ENCODE measurements at regions of chr17 and their contacts with region 1.

Region 1: GRCh38 chr17:7614422-7615264 is at the start of gene FXR2:
- DNase-seq: peak; percentile 100
- ATAC-seq: peak; percentile 96
- H3K4me3 Mint-ChIP-seq: peak within 1 kb of the TSS; percentile 83
- H3K27ac Mint-ChIP-seq: peak within 1 kb of the TSS; percentile 99
- H3K4me1 Mint-ChIP-seq: peaks cover 22% of the 10 kb centered on the region
- H3K27me3 Mint-ChIP-seq: no peaks in the 10 kb centered on the region
- CTCF ChIP-seq: peak; percentile 36; the same call in 1 of the 2 replicates
- total RNA-seq, gene FXR2: 32.5 to 35.1 TPM (median 33.3 TPM) in 3 replicates

Region 2: GRCh38 chr17:7583253-7584109 is 31.2 kb before region 1 on chr17 and contains the start of gene MPDU1:
- CTCF ChIA-PET with region 1: interaction called, 30 read pairs
- POLR2A ChIA-PET with region 1: interaction called, 11 read pairs
- DNase-seq: peak; percentile 96
- ATAC-seq: peak; percentile 26
- H3K4me3 Mint-ChIP-seq: peak within 1 kb of the TSS; percentile 97
- H3K27ac Mint-ChIP-seq: peak within 1 kb of the TSS; percentile 100
- H3K4me1 Mint-ChIP-seq: peaks cover 48% of the 10 kb centered on the region
- H3K27me3 Mint-ChIP-seq: no peaks in the 10 kb centered on the region
- CTCF ChIP-seq: no peak
- total RNA-seq, gene MPDU1: 55.3 to 57.7 TPM (median 57.0 TPM) in 3 replicates

Region 3: DNA sequence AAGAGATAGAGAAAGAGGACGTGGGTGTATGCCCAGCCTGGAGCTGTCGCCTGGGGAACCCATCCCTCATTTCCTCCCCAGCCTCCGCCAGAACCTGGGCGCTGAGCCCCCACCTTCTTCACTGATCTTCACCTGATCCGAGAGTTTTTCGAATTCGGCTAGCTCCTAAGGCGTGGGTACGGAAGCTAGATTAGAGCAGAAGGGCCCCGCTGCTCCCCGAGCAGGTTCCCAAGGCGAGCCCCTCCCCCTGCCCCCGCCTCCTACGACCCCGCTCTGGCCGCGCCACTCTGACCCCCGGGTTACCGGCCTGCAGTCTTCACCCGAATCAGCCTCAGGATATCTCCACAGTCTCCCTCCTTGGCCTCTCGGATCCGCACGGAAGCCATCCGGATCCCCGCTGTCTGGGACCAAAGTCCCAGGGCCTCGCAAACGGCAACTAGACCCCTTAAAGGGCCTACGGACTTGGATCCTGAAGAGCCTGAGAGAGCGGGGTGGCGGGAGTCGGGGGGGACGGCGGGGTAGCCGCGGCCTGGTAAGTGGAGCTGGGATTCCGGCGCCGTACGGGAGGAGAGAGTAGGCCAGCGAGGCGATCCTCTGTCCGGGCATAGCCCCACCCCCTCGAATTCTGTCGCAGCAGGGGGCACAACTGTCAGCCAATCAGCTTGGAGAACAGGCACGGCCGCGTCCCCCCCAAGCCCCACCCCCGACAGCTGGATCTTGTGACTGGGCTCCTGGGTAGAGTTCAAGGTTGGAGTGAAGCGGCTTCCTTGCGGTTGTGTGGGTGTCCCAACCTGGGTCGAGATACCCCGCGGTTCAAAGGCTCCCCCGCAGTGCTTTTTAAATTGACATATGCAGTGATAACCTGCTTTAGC is 12.8 kb after region 1 on chr17 and contains the start of gene SAT2:
- CTCF ChIA-PET with region 1: interaction called, 39 read pairs
- POLR2A ChIA-PET with region 1: interaction called, 8 read pairs
- DNase-seq: peak; percentile 99
- ATAC-seq: peak; percentile 87
- H3K4me3 Mint-ChIP-seq: peak within 1 kb of the TSS; percentile 85
- H3K27ac Mint-ChIP-seq: peak within 1 kb of the TSS; percentile 85
- H3K4me1 Mint-ChIP-seq: peaks cover 9% of the 10 kb centered on the region
- H3K27me3 Mint-ChIP-seq: no peaks in the 10 kb centered on the region
- CTCF ChIP-seq: no peak
- total RNA-seq, gene SAT2: 68.3 to 75.8 TPM (median 73.1 TPM) in 3 replicates

Region 4: DNA sequence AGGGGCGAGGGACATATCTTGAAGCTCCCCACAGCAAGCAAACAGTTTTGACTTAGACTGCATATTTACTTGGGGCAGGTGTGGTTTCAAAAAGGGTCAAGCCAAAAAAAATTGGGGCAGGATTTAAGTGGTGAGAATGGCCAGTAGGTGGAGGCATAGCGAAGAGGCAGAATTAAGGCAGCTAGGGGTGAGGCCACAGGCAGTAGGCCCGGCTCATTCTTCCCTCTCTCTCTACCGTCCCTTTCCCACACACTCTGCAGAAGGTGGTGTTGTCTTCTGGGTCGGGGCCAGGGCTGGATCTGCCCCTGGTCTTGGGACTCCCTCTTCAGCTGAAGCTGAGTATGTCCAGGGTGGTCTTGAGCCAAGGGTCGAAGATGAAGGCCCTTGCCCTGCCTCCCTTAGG is 17.9 kb after region 1 on chr17:
- CTCF ChIA-PET with region 1: interaction called, 39 read pairs
- POLR2A ChIA-PET with region 1: interaction called, 8 read pairs
- DNase-seq: peak; percentile 56
- ATAC-seq: peak; percentile 55
- H3K4me3 Mint-ChIP-seq: no peak overlapping the region
- H3K27ac Mint-ChIP-seq: no peak overlapping the region
- H3K4me1 Mint-ChIP-seq: peaks cover 35% of the 10 kb centered on the region
- H3K27me3 Mint-ChIP-seq: no peaks in the 10 kb centered on the region
- CTCF ChIP-seq: peak; percentile 28; the same call in 1 of the 2 replicates

Region 5: GRCh38 chr17:7650509-7651096 is 36.0 kb after region 1 on chr17 and contains the start of gene ATP1B2:
- CTCF ChIA-PET with region 1: interaction called, 15 read pairs
- POLR2A ChIA-PET with region 1: interaction called, 5 read pairs
- DNase-seq: peak; percentile 96
- ATAC-seq: peak; percentile 97
- H3K4me3 Mint-ChIP-seq: peak within 1 kb of the TSS; percentile 83
- H3K27ac Mint-ChIP-seq: peak within 1 kb of the TSS; percentile 73
- H3K4me1 Mint-ChIP-seq: peaks cover 33% of the 10 kb centered on the region
- H3K27me3 Mint-ChIP-seq: peaks cover 53% of the 10 kb centered on the region
- CTCF ChIP-seq: no peak
- total RNA-seq, gene ATP1B2: 29.1 to 37.5 TPM (median 35.9 TPM) in 3 replicates

Region 6: GRCh38 chr17:7695586-7695985 is 80.9 kb after region 1 on chr17:
- CTCF ChIA-PET with region 1: no interaction called
- POLR2A ChIA-PET with region 1: no interaction called
- DNase-seq: no peak
- ATAC-seq: no peak
- H3K4me3 Mint-ChIP-seq: no peak overlapping the region
- H3K27ac Mint-ChIP-seq: no peak overlapping the region; the same call in 1 of the 2 replicates
- H3K4me1 Mint-ChIP-seq: no peaks in the 10 kb centered on the region
- H3K27me3 Mint-ChIP-seq: no peaks in the 10 kb centered on the region
- CTCF ChIP-seq: no peak

Region 7: DNA sequence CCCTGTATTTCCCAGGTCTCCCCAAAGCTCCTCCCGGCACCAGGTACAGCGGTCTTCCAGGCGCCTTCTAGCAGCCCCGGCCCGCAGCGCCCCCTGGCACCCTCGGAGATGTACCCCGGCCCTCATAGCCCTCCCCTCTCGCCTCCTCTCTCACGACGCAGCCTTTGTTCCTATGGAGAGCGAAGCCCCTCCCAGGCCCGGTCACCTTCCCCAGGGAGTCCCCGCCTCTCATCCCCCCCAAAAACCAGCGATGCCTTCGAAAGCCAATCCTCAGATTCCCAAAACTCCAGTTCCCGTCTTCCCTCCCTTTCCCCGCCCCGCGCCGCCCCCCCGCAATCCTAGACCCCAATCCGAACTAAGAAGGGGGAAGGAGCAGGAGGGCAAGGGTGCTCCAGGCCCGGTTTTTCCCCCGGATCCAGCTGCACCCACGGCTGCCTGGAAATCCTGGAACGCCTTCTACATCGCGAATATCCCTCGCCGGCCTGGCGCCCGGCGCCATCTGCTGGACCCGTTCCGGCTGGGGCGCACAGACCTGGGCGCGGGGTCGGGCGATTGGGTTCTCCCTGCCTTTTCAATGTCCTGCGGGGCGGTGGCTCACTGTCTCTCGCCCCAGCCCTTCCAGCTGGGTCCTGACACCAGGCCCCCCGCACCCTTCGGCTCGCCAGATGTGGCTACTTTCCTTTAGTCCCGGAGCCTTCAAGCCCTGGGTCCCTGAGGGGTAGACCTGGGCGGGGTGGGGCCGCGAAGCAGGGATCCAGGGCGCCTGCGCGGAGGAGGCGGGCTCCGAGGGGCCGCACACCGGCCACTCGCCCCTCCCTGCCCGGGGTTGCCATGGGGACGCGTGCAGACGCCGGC is 102.5 kb after region 1 on chr17 and contains the start of gene DNAH2:
- CTCF ChIA-PET with region 1: interaction called, 12 read pairs
- POLR2A ChIA-PET with region 1: interaction called, 9 read pairs
- DNase-seq: peak; percentile 96
- ATAC-seq: peak; percentile 88
- H3K4me3 Mint-ChIP-seq: peak within 1 kb of the TSS; percentile 83
- H3K27ac Mint-ChIP-seq: peak within 1 kb of the TSS; percentile 72; the same call in 1 of the 2 replicates
- H3K4me1 Mint-ChIP-seq: peaks cover 36% of the 10 kb centered on the region
- H3K27me3 Mint-ChIP-seq: peaks cover 47% of the 10 kb centered on the region
- CTCF ChIP-seq: no peak
- total RNA-seq, gene DNAH2: 0.17 to 0.34 TPM (median 0.27 TPM) in 3 replicates

Measured in WTC11 (cell line).